ENCODE measurements at regions of chr1 and their contacts with region 1.

Region 1: GRCh38 chr1:32240140-32240951 is 6.7 kb upstream of the FAM167B start:
- DNase-seq: no peak
- H3K4me3 ChIP-seq: peak overlapping the region; percentile 59
- H3K27me3 ChIP-seq: no peaks in the 10 kb centered on the region
- CTCF ChIP-seq: peak; percentile 47

Region 2: DNA sequence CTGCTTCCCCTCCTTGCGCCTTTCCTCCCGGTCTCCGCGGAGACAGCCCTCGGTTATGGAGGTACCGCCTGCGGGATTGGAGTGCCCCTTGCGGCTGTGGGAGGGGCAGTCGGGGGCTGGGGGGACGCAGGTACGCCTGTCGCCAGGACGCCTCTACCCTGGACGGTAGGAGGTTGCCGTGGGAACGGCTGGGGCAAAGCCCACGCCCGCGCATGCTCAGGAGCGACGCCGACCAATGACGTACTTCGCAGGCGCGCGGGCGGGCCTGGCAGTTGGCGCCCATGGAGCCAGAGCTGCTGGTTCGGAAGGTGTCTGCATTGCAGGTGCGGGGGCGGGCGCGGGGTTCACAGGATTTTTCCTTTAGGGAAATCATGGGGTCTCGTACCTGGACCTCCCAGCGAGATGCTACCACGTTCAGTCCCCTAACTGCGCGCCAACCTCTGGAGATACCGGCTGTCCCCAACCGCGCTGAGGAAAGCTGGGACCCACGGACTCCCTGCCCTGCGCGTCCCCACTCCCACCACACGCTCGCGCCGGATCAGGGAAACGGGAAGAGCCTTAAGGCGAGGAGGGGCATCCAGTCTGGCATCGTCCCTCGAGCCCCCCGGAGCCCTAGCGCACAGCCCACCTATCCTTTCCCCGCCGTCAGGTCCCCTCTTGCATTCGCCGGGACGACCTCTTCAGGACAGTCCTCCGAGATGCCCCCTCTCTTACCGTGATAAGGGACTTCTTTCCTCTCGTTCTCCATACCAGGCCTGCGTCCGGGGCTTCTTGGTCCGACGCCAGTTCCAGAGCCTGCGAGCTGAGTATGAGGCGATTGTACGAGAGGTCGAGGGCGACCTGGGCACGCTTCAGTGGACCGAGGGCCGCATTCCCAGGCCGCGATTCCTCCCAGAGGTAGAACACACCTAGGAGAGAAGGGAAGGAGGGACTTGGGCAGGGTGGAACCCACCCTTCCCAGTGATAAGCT is 34.7 kb before region 1 on chr1 and contains the start of gene IQCC:
- CTCF ChIA-PET with region 1: no interaction called
- POLR2A ChIA-PET with region 1: interaction called, 15 read pairs
- DNase-seq: no peak
- H3K4me3 ChIP-seq: peak within 1 kb of the TSS; percentile 74
- H3K27me3 ChIP-seq: no peaks in the 10 kb centered on the region
- CTCF ChIP-seq: no peak
- polyA plus RNA-seq, gene IQCC: 1.4 and 2.1 TPM in 2 replicates

Measured in BJ (cell line).